ENCODE measurements at regions of chr5 and their contacts with region 1.

Region 1: GRCh38 chr5:32585446-32586275 is at the start of gene SUB1:
- DNase-seq: peak; percentile 88 to 97 (median 93)
- ATAC-seq: peak; percentile 92 to 96 (median 94)
- H3K4me3 ChIP-seq: peak within 1 kb of the TSS; percentile 73 to 88
- H3K4me3 Mint-ChIP-seq: peak within 1 kb of the TSS; percentile 96 to 98 (median 96)
- H3K27ac ChIP-seq: peak within 1 kb of the TSS; percentile 98
- H3K27ac Mint-ChIP-seq: peak within 1 kb of the TSS; percentile 97 to 98
- H3K4me1 ChIP-seq: peaks cover 32 to 54% of the 10 kb centered on the region in 2 experiments
- H3K4me1 Mint-ChIP-seq: peaks cover 69 to 77% (median 76%) of the 10 kb centered on the region in 3 donors
- H3K27me3 ChIP-seq: no peaks in the 10 kb centered on the region
- H3K27me3 Mint-ChIP-seq: no peaks in the 10 kb centered on the region
- total RNA-seq, gene SUB1: 178 to 339 (median 203) TPM

Region 2: DNA sequence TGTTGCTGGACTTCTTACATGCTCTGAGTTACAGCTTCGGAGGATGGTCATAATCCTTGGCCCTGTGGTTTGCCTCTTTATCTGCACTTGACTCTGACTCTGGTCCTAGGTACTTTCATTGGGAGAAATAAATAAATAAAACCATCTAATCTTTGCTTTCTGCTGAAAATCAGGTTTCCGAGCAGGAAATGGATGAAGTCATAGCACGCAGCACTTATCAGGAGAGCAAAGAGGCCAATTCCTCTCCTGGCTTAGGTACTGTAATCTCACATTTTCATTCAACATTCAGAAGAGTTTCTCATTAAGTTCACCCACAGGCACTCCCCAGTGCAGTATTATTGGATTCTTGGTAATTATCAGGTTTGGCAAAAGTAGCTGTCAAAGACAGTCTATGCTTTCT is 516.3 kb before region 1 on chr5:
- CTCF ChIA-PET with region 1: no interaction called
- POLR2A ChIA-PET with region 1: no interaction called
- DNase-seq: no peak
- ATAC-seq: no peak
- H3K4me3 ChIP-seq: no peak overlapping the region
- H3K4me3 Mint-ChIP-seq: no peak overlapping the region
- H3K27ac ChIP-seq: no peak overlapping the region
- H3K27ac Mint-ChIP-seq: no peak overlapping the region
- H3K4me1 ChIP-seq: no peaks in the 10 kb centered on the region
- H3K4me1 Mint-ChIP-seq: peaks cover 0 to 5% (median 0%) of the 10 kb centered on the region in 3 donors
- H3K27me3 ChIP-seq: no peaks in the 10 kb centered on the region
- H3K27me3 Mint-ChIP-seq: no peaks in the 10 kb centered on the region

Region 3: GRCh38 chr5:32232441-32233219 is 353.0 kb before region 1 on chr5:
- CTCF ChIA-PET with region 1: interaction called, 3 to 16 read pairs
- POLR2A ChIA-PET with region 1: no interaction called
- DNase-seq: peak; percentile 40 to 85 (median 71)
- ATAC-seq: peak; percentile 74 to 88 (median 84)
- H3K4me3 ChIP-seq: no peak overlapping the region
- H3K4me3 Mint-ChIP-seq: no peak overlapping the region
- H3K27ac ChIP-seq: peak overlapping the region; percentile 25
- H3K27ac Mint-ChIP-seq: peak overlapping the region in 1 of 2 donors; percentile 41
- H3K4me1 ChIP-seq: peaks cover 0 to 8% of the 10 kb centered on the region in 2 experiments
- H3K4me1 Mint-ChIP-seq: peaks cover 4 to 7% (median 5%) of the 10 kb centered on the region in 3 donors
- H3K27me3 ChIP-seq: no peaks in the 10 kb centered on the region
- H3K27me3 Mint-ChIP-seq: no peaks in the 10 kb centered on the region

Region 4: GRCh38 chr5:32283539-32284377 is 301.9 kb before region 1 on chr5:
- CTCF ChIA-PET with region 1: no interaction called
- POLR2A ChIA-PET with region 1: no interaction called
- DNase-seq: peak in 3 of 35 experiments; percentile 9 to 29 (median 9)
- ATAC-seq: peak in 2 of 4 experiments; percentile 23 to 30
- H3K4me3 ChIP-seq: no peak overlapping the region
- H3K4me3 Mint-ChIP-seq: no peak overlapping the region
- H3K27ac ChIP-seq: no peak overlapping the region
- H3K27ac Mint-ChIP-seq: no peak overlapping the region
- H3K4me1 ChIP-seq: peaks cover 0 to 20% of the 10 kb centered on the region in 2 experiments
- H3K4me1 Mint-ChIP-seq: peaks cover 44 to 68% (median 59%) of the 10 kb centered on the region in 3 donors
- H3K27me3 ChIP-seq: no peaks in the 10 kb centered on the region
- H3K27me3 Mint-ChIP-seq: no peaks in the 10 kb centered on the region

Region 5: GRCh38 chr5:32482193-32482592 is 103.5 kb before region 1 on chr5:
- CTCF ChIA-PET with region 1: interaction called, 88 to 187 read pairs
- POLR2A ChIA-PET with region 1: no interaction called
- DNase-seq: no peak
- ATAC-seq: no peak
- H3K4me3 ChIP-seq: no peak overlapping the region
- H3K4me3 Mint-ChIP-seq: no peak overlapping the region
- H3K27ac ChIP-seq: no peak overlapping the region
- H3K27ac Mint-ChIP-seq: no peak overlapping the region
- H3K4me1 ChIP-seq: no peaks in the 10 kb centered on the region
- H3K4me1 Mint-ChIP-seq: no peaks in the 10 kb centered on the region
- H3K27me3 ChIP-seq: no peaks in the 10 kb centered on the region
- H3K27me3 Mint-ChIP-seq: no peaks in the 10 kb centered on the region

Region 6: DNA sequence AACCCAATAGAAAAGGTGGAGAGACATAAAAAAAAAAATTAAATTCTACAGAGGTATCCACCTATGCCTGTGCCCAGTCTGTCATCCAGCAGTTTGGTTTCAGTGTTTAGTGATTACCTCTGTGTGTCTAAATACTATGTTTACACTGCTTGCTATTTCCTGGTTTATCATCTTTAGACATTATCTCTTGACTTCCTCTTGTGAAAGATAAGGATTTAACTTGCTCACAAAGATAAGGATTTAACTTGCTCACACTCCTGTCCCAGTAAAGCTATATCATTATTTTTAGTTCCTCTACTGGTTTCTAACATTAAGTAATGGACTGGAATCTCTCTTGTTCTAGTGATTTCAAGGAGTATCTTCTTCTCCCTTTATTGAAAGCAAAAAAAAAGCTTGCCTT is 87.2 kb before region 1 on chr5:
- CTCF ChIA-PET with region 1: interaction called, 11 to 19 read pairs
- POLR2A ChIA-PET with region 1: interaction called in 1 of 2 experiments, 3 read pairs
- DNase-seq: no peak
- ATAC-seq: no peak
- H3K4me3 ChIP-seq: no peak overlapping the region
- H3K4me3 Mint-ChIP-seq: no peak overlapping the region
- H3K27ac ChIP-seq: no peak overlapping the region
- H3K27ac Mint-ChIP-seq: no peak overlapping the region
- H3K4me1 ChIP-seq: no peaks in the 10 kb centered on the region
- H3K4me1 Mint-ChIP-seq: peaks cover 0 to 6% (median 2%) of the 10 kb centered on the region in 3 donors
- H3K27me3 ChIP-seq: peaks cover 0 to 4% of the 10 kb centered on the region in 2 experiments
- H3K27me3 Mint-ChIP-seq: peaks cover 0 to 3% of the 10 kb centered on the region in 2 donors

Region 7: DNA sequence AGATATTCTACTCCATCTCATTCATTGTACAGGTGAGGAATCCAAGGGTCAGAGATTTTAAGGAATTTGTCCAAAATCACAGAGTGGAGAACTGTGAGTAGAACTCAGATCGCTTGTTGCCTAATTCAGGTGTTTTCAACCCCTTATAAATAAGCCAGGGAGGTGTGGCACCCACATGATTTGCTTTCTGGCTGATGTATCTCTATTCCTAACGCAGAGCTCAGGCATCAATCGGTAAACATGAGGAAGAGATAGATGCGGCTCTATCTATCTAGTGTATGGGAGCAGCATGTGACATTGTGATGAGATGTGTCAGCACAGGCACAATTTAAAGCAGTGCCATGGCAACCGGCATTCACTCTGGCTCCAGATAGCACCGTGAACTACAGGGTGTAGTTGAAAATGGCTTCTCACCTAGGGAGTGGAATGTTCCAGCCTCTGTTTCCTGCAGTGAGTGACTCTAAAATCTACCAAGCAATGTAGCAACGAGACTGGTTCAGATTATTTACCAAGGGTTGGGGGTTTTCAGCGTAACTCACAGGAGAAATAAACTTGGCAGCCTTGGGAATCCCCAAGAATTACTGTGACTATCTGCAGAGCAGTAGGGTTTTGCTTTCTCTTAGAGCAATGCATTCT is 53.7 kb before region 1 on chr5:
- CTCF ChIA-PET with region 1: interaction called, 5 to 20 read pairs
- POLR2A ChIA-PET with region 1: interaction called, 5 to 14 read pairs
- DNase-seq: peak in 34 of 35 experiments; percentile 6 to 85 (median 39)
- ATAC-seq: peak; percentile 76 to 82 (median 78)
- H3K4me3 ChIP-seq: peak overlapping the region; percentile 40 to 65
- H3K4me3 Mint-ChIP-seq: peak overlapping the region; percentile 77 to 83 (median 81)
- H3K27ac ChIP-seq: peak overlapping the region; percentile 96
- H3K27ac Mint-ChIP-seq: peak overlapping the region; percentile 89 to 91
- H3K4me1 ChIP-seq: peaks cover 4 to 43% of the 10 kb centered on the region in 2 experiments
- H3K4me1 Mint-ChIP-seq: peaks cover 32 to 58% (median 50%) of the 10 kb centered on the region in 3 donors
- H3K27me3 ChIP-seq: no peaks in the 10 kb centered on the region
- H3K27me3 Mint-ChIP-seq: no peaks in the 10 kb centered on the region

Region 8: DNA sequence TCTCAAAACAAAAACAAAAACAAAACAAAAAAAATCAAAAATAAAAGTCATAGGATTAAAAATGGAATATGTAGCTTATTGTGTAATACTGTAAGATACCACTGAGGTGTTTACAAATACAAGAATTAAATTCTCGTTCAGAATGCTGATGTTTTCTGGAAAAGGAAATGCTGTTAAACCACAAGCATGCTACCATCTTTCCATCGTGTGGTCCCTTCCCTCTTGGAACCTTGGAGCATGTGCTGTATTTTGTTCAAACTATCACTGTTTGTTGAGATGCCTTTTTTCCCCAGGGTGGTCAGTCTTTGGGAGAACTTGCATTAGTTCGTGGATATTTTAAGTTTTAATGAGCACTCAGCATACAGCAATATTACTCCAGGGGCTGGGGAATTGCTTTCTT is 39.4 kb after region 1 on chr5:
- CTCF ChIA-PET with region 1: no interaction called
- POLR2A ChIA-PET with region 1: no interaction called
- DNase-seq: no peak
- ATAC-seq: no peak
- H3K4me3 ChIP-seq: no peak overlapping the region
- H3K4me3 Mint-ChIP-seq: no peak overlapping the region
- H3K27ac ChIP-seq: no peak overlapping the region
- H3K27ac Mint-ChIP-seq: no peak overlapping the region
- H3K4me1 ChIP-seq: no peaks in the 10 kb centered on the region
- H3K4me1 Mint-ChIP-seq: no peaks in the 10 kb centered on the region
- H3K27me3 ChIP-seq: peaks cover 0 to 4% of the 10 kb centered on the region in 2 experiments
- H3K27me3 Mint-ChIP-seq: no peaks in the 10 kb centered on the region

Region 9: GRCh38 chr5:32711681-32712480 is 126.2 kb after region 1 on chr5:
- CTCF ChIA-PET with region 1: no interaction called
- POLR2A ChIA-PET with region 1: no interaction called
- DNase-seq: no peak
- ATAC-seq: peak in 1 of 4 experiments; percentile 27
- H3K4me3 ChIP-seq: no peak overlapping the region
- H3K4me3 Mint-ChIP-seq: peak overlapping the region in 2 of 3 donors; percentile 52 to 70
- H3K27ac ChIP-seq: no peak overlapping the region
- H3K27ac Mint-ChIP-seq: no peak overlapping the region
- H3K4me1 ChIP-seq: peaks cover 2 to 17% of the 10 kb centered on the region in 2 experiments
- H3K4me1 Mint-ChIP-seq: peaks cover 30 to 37% (median 35%) of the 10 kb centered on the region in 3 donors
- H3K27me3 ChIP-seq: peaks cover 0 to 50% of the 10 kb centered on the region in 2 experiments
- H3K27me3 Mint-ChIP-seq: peaks cover 53 to 71% of the 10 kb centered on the region in 2 donors

Measured in T-cell (primary cell).